ENCODE measurements at regions of chr5 and their contacts with region 1.

Region 1: DNA sequence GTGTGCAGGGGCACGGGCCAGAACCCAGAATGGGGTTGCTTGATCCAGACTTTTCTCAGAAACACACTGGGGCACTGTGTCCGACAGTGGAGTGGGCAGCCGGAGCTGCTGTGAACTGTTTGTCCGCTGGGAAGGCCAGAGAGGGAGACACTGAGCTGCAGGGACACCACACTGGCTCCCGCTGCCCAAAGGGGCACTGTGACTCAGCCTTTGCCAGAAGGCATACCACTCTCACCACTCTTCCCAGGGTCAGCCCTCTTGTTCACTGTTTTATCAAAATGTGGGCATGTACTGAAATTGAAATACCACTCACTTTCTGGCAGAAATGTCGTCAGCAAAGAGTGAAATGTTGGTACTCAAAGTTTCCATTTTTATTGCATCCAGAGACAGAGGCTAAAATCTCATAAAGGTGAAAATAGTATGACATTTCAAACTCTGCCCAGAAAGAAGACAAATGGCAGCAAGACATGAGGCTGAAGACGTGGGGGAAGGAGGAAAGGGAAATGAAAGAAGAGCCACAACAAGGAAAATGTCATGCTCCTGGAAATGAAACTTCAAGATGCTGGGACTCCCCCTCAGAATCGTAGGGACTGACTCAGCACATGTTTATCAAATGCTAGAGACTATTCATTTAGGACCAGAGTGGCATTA is 4.5 kb upstream of the IL7R start:
- DNase-seq: peak; percentile 86
- H3K4me3 Mint-ChIP-seq: peak overlapping the region; percentile 87
- H3K27ac Mint-ChIP-seq: peak overlapping the region; percentile 99
- H3K4me1 Mint-ChIP-seq: peaks cover 59% of the 10 kb centered on the region
- H3K27me3 Mint-ChIP-seq: no peaks in the 10 kb centered on the region

Region 2: DNA sequence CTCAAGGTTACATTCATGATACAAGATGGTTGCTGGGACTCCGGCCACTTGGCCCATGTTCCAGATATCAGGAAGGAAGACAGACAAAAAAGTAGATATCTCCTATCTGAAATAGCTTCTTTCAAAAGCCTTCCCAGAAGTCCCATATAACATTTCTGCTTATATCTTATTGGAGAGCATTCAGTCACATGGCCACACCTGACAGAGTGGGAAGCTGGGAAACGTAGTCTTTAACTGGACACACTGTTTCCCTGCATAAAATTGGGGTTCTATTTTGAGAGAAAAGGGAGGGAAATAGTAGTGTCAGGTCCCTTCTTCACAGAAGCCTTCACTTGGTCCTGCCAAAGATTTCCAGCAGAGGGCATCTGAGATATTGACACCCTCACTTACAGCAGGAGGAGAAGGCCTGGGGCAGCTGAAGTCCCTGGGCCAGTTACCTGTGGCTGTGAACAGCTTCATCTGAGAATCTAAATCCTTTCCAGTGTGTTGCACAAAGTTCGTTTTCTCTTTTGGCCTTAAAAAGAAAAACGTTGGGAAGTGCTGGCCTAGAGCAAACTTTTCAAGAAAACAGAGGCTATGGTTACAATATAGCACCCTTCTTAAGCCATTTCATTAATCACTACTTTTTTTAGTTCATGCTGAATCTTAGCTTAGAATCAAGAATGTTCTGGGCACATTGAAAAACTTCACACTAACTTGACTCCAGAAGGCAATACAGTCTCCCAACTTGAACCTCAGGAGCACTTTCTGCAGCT is 201.0 kb before region 1 on chr5:
- intact Hi-C with region 1: loop called (anchors 2 kb)
- DNase-seq: peak; percentile 90
- H3K4me3 Mint-ChIP-seq: no peak overlapping the region
- H3K27ac Mint-ChIP-seq: no peak overlapping the region
- H3K4me1 Mint-ChIP-seq: peaks cover 2% of the 10 kb centered on the region
- H3K27me3 Mint-ChIP-seq: no peaks in the 10 kb centered on the region

Region 3: DNA sequence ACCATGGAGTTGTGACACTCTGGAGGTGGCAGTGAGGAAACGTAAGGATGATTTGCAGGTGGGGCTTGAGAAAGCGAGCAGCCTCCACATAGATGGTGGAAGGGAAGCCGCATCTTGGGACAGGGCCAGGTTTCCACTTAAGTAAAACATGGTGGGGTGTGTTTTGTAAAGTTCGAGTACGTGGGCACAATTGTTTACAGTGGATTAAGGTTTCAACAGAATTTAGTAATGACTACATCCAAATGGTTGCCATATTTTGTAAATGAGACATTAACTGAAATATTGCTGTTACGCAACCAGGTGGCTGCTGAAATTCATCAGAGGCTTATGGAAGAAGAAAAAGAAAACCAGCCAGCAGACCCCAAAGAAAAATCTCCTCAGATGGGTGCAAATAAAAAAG is 80.9 kb before region 1 on chr5:
- intact Hi-C with region 1: loop called (anchors 1 kb)
- DNase-seq: peak; percentile 40
- H3K4me3 Mint-ChIP-seq: no peak overlapping the region
- H3K27ac Mint-ChIP-seq: no peak overlapping the region
- H3K4me1 Mint-ChIP-seq: peaks cover 20% of the 10 kb centered on the region
- H3K27me3 Mint-ChIP-seq: no peaks in the 10 kb centered on the region

Region 4: DNA sequence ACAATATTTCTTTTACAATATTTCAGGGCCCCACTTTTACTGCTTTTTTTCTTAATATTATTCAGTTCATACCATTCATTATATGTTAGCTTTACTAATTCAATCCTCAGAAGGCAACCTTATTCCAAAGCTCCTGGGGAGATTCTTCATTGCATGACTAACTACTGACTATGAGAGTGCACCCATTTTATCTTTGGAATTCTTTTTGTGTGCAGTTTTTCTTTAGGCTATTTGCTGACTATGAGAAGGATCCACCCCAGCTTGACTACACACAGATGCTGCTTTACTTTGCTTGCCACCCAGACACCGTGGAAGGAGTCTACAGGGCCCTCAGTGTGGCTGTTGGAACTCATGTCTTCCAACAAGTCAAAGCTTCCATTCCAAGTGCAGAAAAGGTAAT is 52.5 kb before region 1 on chr5:
- intact Hi-C with region 1: loop called (anchors 1 kb)
- DNase-seq: peak; percentile 49
- H3K4me3 Mint-ChIP-seq: no peak overlapping the region
- H3K27ac Mint-ChIP-seq: no peak overlapping the region
- H3K4me1 Mint-ChIP-seq: peaks cover 55% of the 10 kb centered on the region
- H3K27me3 Mint-ChIP-seq: no peaks in the 10 kb centered on the region

Region 5: GRCh38 chr5:35902046-35902676 is 50.0 kb after region 1 on chr5:
- intact Hi-C with region 1: loop called (anchors 1 kb)
- DNase-seq: peak; percentile 87
- H3K4me3 Mint-ChIP-seq: peak overlapping the region; percentile 36
- H3K27ac Mint-ChIP-seq: peak overlapping the region; percentile 79
- H3K4me1 Mint-ChIP-seq: peaks cover 76% of the 10 kb centered on the region
- H3K27me3 Mint-ChIP-seq: no peaks in the 10 kb centered on the region

Region 6: DNA sequence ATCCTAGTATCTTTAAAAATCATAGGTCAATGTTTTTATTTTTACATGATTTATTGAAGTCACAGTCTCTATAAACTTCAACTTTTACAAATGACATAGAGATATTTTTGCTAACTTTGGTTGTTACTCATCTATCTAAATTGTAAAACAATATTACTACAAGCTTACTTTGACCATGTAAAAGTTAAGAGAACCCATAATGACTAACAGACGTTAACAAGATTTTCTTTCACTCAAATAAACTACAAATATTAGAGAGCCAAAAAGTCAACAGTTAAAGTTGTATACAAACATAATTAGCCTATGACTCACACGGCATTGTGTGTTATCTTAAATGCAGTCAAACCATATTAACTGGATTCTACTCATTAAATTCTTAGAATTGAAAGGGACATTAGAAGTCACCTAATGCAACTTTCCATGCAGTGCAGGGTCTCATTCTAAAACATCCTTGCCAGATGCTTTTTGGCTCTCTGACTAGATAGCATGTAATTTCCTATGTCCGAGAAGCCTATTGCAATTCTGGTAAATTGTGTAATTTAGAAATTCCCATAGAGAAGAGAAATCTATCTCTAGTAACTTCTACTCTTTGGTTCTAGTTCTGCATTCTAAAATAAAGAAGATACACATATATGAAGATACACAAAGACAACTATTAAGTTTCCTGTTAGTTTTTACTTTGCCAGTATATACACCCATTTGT is 256.7 kb after region 1 on chr5:
- intact Hi-C with region 1: no loop called
- DNase-seq: no peak
- H3K4me3 Mint-ChIP-seq: no peak overlapping the region
- H3K27ac Mint-ChIP-seq: no peak overlapping the region
- H3K4me1 Mint-ChIP-seq: no peaks in the 10 kb centered on the region
- H3K27me3 Mint-ChIP-seq: no peaks in the 10 kb centered on the region

Measured in activated CD4-positive, alpha-beta T cell treated with anti-CD3 and anti-CD28 coated beads, Interleukin-2, amount 10 ng/mL, durations not matched to agents 24 days and 14 days (primary cell).